ENCODE measurements at regions of chr17 and their contacts with region 1.

Region 1: DNA sequence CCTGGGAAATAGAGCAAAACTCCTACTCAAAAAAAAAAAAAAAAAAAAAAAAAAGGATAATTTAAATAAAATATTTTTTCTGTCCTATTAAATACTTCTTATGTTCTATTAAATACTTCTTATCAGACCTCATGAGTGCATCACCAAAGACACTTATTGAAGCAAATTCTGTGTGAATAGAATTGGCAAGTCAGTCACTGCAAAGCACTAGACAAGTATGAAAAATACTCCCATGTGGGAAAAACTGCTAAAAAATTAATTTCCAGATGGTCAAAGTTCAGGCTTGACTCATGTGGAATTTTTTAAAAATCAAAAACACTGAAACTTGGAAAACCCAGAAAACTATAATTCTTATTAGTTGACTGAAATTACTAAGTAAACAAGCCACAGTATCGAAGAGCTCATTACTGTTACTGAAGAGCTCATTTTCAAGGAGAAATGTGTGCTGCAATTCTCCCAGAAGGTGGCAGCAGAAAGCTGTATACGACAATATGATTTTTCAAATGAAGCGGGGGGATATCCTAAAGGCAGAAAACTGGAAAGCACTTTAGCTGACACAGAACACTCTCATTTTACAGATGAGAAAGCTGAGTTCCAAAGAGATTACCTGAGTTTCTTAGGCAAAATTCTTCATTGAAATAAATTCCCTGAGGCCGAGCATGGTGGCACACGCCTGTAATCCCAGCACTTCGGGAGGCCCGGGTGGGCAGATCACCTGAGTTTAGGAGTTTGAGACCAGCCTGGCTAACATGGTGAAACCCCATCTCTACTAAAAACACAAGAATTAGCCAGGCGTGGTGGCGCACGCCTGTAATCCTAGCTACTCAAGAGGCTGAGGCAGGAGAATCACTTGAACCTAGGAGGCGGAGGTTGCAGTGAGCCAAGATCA is 15.9 kb upstream of the FBXO47 start:
- DNase-seq: peak; percentile 69
- ATAC-seq: peak; percentile 76
- H3K4me3 ChIP-seq: no peak overlapping the region
- H3K27ac ChIP-seq: no peak overlapping the region
- H3K4me1 ChIP-seq: no peaks in the 10 kb centered on the region
- H3K27me3 ChIP-seq: peaks cover 0 to 2% of the 10 kb centered on the region in 2 experiments; a peak in 1 of 5 replicates
- CTCF ChIP-seq: peak; percentile 87
- EP300 ChIP-seq: no peak
- POLR2A ChIP-seq: no peak
- RAD21 ChIP-seq: peak; percentile 80; the same call in 1 of the 2 replicates

Region 2: DNA sequence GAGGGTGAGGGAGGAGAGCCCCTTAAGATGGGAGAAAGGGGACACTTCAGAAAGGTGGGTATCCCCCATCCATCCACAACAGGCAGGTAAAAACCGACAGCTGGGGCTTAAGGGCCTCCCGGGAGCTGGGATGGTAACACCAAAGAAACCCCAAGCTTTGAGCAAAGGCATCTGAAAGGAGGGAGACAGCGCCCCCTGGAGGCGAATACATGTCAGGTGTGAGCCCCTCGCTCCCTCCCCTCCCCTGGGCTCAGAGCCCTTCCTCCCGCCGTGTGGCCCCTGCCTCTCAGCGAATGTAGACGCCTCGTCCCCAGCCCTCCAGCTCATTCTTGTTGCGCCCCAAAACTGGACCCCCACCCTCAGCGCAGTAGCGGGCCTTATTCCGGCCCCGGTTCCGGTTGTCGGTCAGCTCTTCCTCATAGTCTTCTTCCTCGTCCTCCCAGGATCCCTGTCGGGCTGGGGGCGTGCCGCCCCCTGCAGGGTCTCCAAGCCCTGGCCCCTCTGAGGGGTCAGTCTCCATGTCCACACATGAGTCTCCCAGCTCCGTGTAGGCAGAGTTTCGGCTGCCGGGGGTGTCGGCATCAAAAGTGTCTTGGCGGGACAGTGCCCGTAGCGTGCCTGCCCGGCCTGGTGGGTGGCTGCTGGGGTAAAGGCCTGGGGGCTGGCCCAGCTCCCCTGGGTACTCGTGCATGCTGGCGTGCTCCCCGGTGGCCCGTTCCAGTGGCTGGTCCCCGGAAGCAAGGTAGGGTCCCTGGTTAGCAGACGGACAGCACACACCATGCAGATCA is 192.0 kb after region 1 on chr17:
- CTCF ChIA-PET with region 1: interaction called, 8 read pairs
- POLR2A ChIA-PET with region 1: no interaction called
- in situ Hi-C with region 1: no loop called
- intact Hi-C with region 1: loop called (anchors 1 kb)
- DNase-seq: peak; percentile 65
- ATAC-seq: peak; percentile 88
- H3K4me3 ChIP-seq: no peak overlapping the region
- H3K27ac ChIP-seq: no peak overlapping the region
- H3K4me1 ChIP-seq: no peaks in the 10 kb centered on the region
- H3K27me3 ChIP-seq: no peaks in the 10 kb centered on the region
- CTCF ChIP-seq: peak; percentile 86
- EP300 ChIP-seq: no peak
- POLR2A ChIP-seq: no peak
- RAD21 ChIP-seq: no peak

Region 3: DNA sequence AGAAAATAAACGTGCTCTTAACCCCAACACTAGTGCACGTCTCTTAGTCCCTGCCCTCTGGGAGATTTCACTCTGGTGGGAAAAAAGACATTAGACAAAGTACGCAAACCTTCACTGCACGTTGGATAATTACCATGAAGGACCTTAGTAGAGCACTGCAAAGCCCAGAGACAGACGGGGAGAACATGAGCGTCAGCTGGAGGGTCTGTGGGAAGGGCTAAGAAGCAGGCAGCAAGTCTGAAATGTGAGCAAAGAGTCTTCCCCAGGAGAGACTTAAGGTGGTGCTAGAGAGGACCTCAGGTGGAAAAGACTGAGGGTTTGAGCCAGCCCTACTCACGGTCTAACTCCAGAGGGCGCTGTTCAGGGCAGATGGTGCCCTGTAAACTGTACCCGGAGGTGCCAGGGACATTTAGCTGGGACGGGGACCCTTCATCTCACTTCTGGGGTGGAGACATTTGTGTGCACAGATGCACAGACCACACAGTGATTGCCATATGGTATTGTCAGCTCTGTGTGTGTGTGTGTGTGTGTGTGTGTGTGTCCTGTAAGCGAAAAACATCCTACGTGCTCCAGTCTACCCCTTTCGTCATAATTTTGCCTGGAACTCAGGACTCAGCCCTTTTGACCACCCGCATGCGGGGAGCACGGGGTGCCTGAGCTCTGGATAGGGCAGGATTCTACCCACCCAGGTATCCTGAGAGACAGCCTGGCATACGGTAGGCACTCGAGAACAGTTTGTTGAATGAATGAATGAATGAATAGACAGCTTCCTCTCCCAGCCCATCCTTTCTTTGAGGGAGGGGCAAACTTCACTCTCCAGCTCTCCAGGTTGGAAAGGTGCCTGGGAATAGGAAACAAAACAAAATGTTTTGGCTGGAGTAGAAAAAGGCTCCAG is 252.7 kb after region 1 on chr17:
- CTCF ChIA-PET with region 1: no interaction called
- POLR2A ChIA-PET with region 1: no interaction called
- in situ Hi-C with region 1: no loop called
- intact Hi-C with region 1: loop called (anchors 10 kb)
- DNase-seq: peak; percentile 60
- ATAC-seq: peak; percentile 55
- H3K4me3 ChIP-seq: no peak overlapping the region
- H3K27ac ChIP-seq: no peak overlapping the region
- H3K4me1 ChIP-seq: peaks cover 14% of the 10 kb centered on the region; the same call in 1 of the 2 replicates
- H3K27me3 ChIP-seq: peaks cover 2 to 24% of the 10 kb centered on the region in 2 experiments; a peak in 4 of 5 replicates
- CTCF ChIP-seq: peak; percentile 78
- EP300 ChIP-seq: no peak
- POLR2A ChIP-seq: no peak
- RAD21 ChIP-seq: peak; percentile 18; the same call in 1 of the 2 replicates